A673 (cell line): ENCODE measurements at regions of chr14 and their contacts with region 1.

Region 1: DNA sequence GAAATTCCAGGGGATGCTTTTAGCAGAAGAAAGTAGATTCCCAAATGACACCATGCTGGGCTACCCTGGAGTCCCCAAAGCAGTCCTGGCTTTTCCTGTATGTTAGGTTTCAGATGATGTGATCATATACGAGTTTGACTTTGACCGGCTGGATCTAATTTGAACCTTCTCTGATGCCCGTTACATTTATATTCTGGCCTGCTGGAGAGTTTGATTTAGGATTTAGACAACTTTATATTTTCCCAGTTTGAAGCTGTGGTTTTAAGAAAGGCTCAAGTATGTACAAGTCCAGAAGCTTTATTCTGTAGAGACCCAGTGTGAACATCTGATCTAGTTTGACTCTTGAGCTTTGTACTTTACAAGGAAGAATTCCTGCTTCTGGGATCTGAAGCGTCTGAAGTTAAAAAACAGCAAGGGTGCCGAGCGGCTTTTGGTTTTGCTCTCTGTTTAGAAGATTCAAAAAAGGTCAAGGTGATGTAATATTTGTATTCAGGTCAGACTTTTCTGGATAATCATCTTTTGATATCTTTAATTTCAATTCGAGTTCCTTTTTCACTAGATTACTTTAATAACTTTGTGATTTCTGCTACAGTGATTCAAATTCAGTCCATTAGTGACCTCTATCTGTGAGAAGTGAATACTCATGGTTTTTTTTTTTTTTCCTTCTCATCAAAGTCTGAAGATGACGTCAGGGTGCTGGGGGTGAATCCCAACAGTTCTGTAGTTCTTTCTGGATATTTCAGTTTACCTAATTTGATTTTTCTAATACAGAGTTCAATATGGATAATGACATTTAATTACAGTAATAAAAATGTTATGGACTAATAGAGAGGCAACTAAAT is 6.3 kb downstream of the FLRT2 start:
- DNase-seq: peak; percentile 79
- H3K4me3 ChIP-seq: peak overlapping the region; percentile 77
- H3K27ac ChIP-seq: peak overlapping the region; percentile 45
- H3K4me1 ChIP-seq: peaks cover 36% of the 10 kb centered on the region
- H3K27me3 ChIP-seq: no peaks in the 10 kb centered on the region
- CTCF ChIP-seq: peak; percentile 61

Region 2: DNA sequence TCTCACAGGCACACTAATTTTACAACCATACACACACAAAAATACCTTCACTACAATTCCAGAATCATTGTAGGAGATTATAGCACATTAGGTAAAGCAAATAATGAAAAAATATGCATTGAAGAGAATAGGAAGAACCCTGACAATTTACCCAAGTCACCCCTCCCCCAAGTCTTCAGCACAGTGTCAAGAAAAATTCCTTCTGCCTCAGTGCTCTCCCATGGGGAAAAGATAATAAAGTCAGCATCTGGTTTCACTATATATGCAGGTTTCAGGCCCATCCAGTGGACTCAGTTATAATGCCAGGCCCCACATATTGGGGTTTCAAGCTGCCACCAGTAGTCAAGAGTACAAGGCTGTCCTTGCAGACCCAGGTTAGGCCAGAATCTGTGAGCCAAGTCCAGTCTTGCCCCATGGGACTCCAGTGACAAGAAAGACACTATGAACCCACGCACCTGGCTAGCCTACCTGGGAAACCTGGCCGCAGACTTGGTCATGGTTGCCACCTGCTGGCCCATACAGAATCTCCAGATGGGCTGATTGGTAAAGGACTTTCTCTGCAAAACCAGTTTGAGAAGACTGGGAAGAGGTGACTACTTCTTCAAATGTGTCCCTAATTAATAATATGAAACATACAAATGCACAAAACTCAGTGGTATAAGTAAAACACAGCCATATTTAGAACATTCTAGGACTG is 404.8 kb before region 1 on chr14:
- CTCF ChIA-PET with region 1: no interaction called
- POLR2A ChIA-PET with region 1: no interaction called
- intact Hi-C with region 1: no loop called
- DNase-seq: no peak
- H3K4me3 ChIP-seq: no peak overlapping the region
- H3K27ac ChIP-seq: no peak overlapping the region
- H3K4me1 ChIP-seq: no peaks in the 10 kb centered on the region
- H3K27me3 ChIP-seq: no peaks in the 10 kb centered on the region
- CTCF ChIP-seq: peak; percentile 20; the same call in 1 of the 2 replicates

Region 3: GRCh38 chr14:85607651-85608081 is 71.5 kb after region 1 on chr14:
- CTCF ChIA-PET with region 1: no interaction called
- POLR2A ChIA-PET with region 1: interaction called, 3 read pairs
- intact Hi-C with region 1: loop called (anchors 2 kb)
- DNase-seq: peak; percentile 65
- H3K4me3 ChIP-seq: no peak overlapping the region
- H3K27ac ChIP-seq: peak overlapping the region; percentile 33
- H3K4me1 ChIP-seq: peaks cover 54% of the 10 kb centered on the region
- H3K27me3 ChIP-seq: no peaks in the 10 kb centered on the region
- CTCF ChIP-seq: no peak

Region 4: GRCh38 chr14:86057018-86057667 is 520.9 kb after region 1 on chr14:
- CTCF ChIA-PET with region 1: no interaction called
- POLR2A ChIA-PET with region 1: no interaction called
- intact Hi-C with region 1: loop called (anchors 5 kb)
- DNase-seq: peak; percentile 58
- H3K4me3 ChIP-seq: no peak overlapping the region
- H3K27ac ChIP-seq: no peak overlapping the region
- H3K4me1 ChIP-seq: no peaks in the 10 kb centered on the region
- H3K27me3 ChIP-seq: no peaks in the 10 kb centered on the region
- CTCF ChIP-seq: peak; percentile 84